ENCODE measurements at regions of chr1 and their contacts with region 1.

Region 1: DNA sequence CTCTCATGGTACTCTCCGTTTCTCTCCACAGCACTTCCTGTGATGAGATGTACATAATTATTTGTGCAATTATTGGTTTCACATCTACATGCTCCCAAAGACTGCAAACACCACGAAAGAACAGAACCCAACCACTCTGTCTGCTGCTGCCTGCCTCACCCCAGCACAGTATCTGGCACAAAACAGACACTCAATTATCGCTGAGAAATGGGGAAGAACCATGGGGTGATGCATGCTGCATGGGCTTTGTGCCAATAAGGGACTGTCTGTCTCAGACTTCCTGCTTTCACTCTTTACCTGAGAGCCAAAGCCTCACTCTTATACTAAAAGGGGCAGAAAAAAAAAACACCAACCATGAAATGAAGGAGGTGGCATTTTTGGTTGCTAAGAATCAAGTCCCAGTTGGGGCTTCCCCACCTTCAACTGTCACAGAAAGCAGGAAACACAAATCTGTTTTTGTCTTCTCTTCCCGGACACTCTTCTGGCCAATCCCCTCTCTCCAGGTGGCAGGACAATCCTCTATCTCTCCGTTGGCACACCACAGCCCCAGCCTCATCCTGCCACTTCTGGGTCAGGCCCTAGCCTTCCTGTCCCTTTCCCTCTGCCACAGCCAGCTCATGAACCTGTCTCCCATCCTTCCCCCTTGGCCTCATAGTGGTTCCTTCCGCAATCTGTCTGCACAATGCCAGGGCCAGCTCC is 82.0 kb downstream of the TGFBR3 start:
- DNase-seq: peak; percentile 70
- H3K4me3 Mint-ChIP-seq: peak overlapping the region; percentile 72
- H3K27ac Mint-ChIP-seq: peak overlapping the region; percentile 93
- H3K4me1 Mint-ChIP-seq: peaks cover 68% of the 10 kb centered on the region
- H3K27me3 Mint-ChIP-seq: peaks cover 6% of the 10 kb centered on the region

Region 2: GRCh38 chr1:91511386-91511785 is 292.6 kb before region 1 on chr1:
- intact Hi-C with region 1: loop called (anchors 2 kb)
- DNase-seq: no peak
- H3K4me3 Mint-ChIP-seq: no peak overlapping the region
- H3K27ac Mint-ChIP-seq: no peak overlapping the region
- H3K4me1 Mint-ChIP-seq: peaks cover 25% of the 10 kb centered on the region
- H3K27me3 Mint-ChIP-seq: no peaks in the 10 kb centered on the region

Region 3: DNA sequence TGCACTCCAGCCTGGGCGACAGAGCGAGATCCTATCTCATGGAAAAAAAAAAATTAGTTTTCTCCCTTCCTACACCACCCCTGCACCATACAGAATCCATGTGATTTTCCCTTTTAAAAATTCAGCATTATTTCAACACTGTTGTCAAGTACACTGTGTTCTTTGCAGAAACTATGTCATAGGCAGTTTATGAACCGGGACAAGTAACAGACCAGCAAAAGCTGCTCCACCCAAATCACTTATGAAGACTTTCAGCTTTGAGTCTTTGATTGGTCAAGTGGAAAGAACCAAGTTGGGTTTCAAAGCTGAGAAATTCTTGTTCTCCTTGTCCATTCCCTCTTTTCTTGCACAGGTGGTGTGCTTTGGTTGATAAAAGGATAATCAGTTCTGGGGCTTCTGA is 130.4 kb before region 1 on chr1:
- intact Hi-C with region 1: loop called (anchors 1 kb)
- DNase-seq: no peak
- H3K4me3 Mint-ChIP-seq: no peak overlapping the region
- H3K27ac Mint-ChIP-seq: peak overlapping the region; percentile 50
- H3K4me1 Mint-ChIP-seq: peaks cover 39% of the 10 kb centered on the region
- H3K27me3 Mint-ChIP-seq: no peaks in the 10 kb centered on the region

Region 4: GRCh38 chr1:91712981-91713841 is 90.8 kb before region 1 on chr1:
- intact Hi-C with region 1: loop called (anchors 1 kb)
- DNase-seq: peak; percentile 52
- H3K4me3 Mint-ChIP-seq: peak overlapping the region; percentile 61
- H3K27ac Mint-ChIP-seq: peak overlapping the region; percentile 94
- H3K4me1 Mint-ChIP-seq: peaks cover 59% of the 10 kb centered on the region
- H3K27me3 Mint-ChIP-seq: peaks cover 4% of the 10 kb centered on the region

Region 5: DNA sequence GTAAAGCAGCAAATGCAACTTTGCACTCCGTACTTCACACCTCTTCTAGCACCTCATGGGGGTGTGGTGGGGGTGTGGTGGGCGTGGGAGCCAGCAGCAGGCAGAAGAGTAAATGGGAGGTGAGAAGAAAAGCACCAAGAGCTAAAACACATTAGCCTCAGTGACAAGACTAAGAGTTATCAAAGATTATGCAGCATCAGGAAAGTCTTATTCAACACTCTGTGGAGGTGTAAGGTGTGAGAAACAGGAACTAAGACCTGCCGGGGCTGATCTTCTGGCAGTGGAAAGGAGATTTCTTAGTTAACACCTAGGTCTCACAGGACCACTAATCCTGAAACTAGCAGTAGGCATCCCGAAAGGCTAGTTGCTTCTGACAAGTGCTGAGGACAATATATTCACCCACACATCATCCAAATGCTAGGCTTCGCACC is 72.1 kb after region 1 on chr1:
- intact Hi-C with region 1: loop called (anchors 1 kb)
- DNase-seq: no peak
- H3K4me3 Mint-ChIP-seq: peak overlapping the region; percentile 37
- H3K27ac Mint-ChIP-seq: peak overlapping the region; percentile 71
- H3K4me1 Mint-ChIP-seq: peaks cover 72% of the 10 kb centered on the region
- H3K27me3 Mint-ChIP-seq: peaks cover 6% of the 10 kb centered on the region

Region 6: DNA sequence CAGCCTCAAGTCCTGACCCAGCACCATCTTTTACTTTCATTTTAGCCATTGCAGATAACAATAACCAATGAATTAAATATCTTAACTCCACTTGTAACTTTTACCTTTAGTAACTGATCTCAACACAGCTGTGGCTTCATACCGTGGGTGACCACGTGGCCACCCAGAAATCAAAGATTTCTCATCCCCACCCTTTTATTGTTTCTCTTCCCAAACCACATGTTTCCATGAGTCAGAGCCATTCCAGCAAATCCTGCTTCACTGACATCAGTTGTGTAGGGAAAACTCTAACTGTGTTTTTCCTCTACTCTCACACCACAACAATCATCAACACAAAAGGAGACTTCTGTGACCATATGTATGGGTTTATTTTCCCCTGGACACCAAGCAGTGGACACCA is 120.2 kb after region 1 on chr1:
- intact Hi-C with region 1: loop called (anchors 2 kb)
- DNase-seq: no peak
- H3K4me3 Mint-ChIP-seq: no peak overlapping the region
- H3K27ac Mint-ChIP-seq: peak overlapping the region; percentile 3
- H3K4me1 Mint-ChIP-seq: peaks cover 19% of the 10 kb centered on the region
- H3K27me3 Mint-ChIP-seq: peaks cover 11% of the 10 kb centered on the region

Region 7: DNA sequence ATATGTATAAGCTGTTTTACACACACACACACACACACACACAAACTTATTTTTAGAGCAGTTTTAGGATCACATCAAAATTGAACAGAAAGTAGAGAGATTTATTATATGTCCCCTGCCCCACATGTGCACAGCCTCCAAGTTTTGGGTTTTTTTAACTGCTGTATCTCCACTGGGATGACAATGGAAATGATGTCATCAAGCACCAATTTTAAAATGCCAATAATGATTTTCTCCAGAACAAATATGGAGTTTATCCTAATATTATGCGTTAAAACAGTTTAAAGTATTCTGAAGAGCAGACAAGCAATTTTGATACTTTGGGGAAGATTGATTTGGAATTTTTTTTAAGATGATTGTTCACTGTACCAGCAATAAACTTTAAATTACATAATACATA is 626.0 kb after region 1 on chr1:
- intact Hi-C with region 1: no loop called
- DNase-seq: no peak
- H3K4me3 Mint-ChIP-seq: no peak overlapping the region
- H3K27ac Mint-ChIP-seq: no peak overlapping the region
- H3K4me1 Mint-ChIP-seq: no peaks in the 10 kb centered on the region
- H3K27me3 Mint-ChIP-seq: peaks cover 2% of the 10 kb centered on the region